Activated CD4-positive, alpha-beta T cell treated with anti-CD3 and anti-CD28 coated beads, Interleukin-2, amount 10 ng/mL, durations not matched to agents 7 days and 5 days (primary cell): ENCODE measurements at regions of chr10 and their contacts with region 1.

Region 1: GRCh38 chr10:70272925-70273316 is 10.9 kb downstream of the NPFFR1 start:
- DNase-seq: peak; percentile 14
- H3K4me3 Mint-ChIP-seq: no peak overlapping the region
- H3K27ac Mint-ChIP-seq: peak overlapping the region; percentile 58
- H3K4me1 Mint-ChIP-seq: peaks cover 16% of the 10 kb centered on the region
- H3K27me3 Mint-ChIP-seq: no peaks in the 10 kb centered on the region

Region 2: DNA sequence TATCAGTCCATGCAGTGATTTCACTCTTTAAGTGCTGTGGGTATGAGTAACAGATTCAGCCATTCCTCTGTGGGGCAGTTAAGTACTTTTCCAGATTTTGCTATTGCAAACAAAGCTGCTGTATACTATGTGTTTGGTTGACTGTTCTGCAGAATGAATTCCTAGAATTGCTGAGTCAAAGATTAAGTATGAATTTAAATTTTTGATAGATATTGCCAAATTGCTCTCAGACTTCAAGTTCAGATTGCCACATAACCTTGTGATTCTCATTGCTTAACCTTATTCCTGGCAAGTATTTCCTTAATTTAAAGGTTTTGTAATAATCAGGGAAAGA is 81.0 kb before region 1 on chr10:
- CTCF ChIA-PET with region 1: no interaction called
- POLR2A ChIA-PET with region 1: no interaction called
- DNase-seq: no peak
- H3K4me3 Mint-ChIP-seq: no peak overlapping the region
- H3K27ac Mint-ChIP-seq: no peak overlapping the region
- H3K4me1 Mint-ChIP-seq: peaks cover 2% of the 10 kb centered on the region
- H3K27me3 Mint-ChIP-seq: no peaks in the 10 kb centered on the region

Region 3: DNA sequence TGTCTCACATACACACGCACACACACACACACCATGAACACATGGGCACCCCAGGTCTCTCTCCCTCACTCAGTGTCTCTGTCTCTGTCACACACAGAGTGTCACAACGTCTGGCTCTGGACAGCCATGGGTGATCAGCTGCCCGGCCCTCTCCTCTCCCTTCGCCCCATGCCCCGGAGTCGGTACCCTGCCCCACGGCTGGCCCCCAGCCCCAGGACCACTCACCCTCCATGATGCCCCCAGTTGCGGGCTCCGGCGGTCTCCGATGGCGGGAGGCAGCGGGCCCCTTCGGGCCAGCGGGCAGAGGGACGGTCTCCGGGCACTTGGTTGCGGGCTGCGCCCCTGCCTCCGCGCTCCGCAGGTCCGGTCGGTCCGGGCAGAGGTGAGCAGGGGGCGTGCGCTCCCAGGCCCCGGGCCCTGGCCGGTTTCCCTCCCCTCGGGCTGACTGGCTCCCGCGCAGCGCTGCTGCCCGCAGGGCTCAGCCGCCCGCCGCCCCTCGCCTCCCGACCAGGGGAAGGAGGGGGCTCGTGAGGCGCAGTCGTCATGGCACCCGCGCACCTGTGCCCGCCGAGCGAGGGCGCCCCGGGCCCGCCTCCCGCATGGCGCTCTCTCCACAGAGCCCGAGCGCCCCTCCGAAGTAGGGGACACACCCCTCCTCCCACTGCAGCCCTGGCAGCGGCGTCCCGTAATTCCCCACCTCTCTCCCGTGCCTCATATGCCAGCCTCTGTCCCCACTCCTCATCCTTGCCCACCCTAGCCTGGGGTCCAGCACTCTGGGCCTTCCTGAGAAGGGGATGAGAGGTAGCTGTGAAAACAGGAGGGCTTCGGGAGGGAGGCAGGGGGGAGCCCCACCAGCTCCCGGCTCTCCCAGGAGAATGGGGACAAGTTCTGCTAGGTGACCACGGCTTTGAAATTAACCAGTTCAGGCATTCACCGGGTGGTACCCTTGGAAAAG is 10.8 kb after region 1 on chr10 and contains the start of gene NPFFR1:
- CTCF ChIA-PET with region 1: interaction called, 10 read pairs
- POLR2A ChIA-PET with region 1: no interaction called
- DNase-seq: no peak
- H3K4me3 Mint-ChIP-seq: no peak within 1 kb of the TSS
- H3K27ac Mint-ChIP-seq: no peak within 1 kb of the TSS
- H3K4me1 Mint-ChIP-seq: peaks cover 5% of the 10 kb centered on the region
- H3K27me3 Mint-ChIP-seq: peaks cover 66% of the 10 kb centered on the region
- total RNA-seq, gene NPFFR1: not detected